Panc1 (cell line): ENCODE measurements at regions of chr2 and their contacts with region 1.

Region 1: DNA sequence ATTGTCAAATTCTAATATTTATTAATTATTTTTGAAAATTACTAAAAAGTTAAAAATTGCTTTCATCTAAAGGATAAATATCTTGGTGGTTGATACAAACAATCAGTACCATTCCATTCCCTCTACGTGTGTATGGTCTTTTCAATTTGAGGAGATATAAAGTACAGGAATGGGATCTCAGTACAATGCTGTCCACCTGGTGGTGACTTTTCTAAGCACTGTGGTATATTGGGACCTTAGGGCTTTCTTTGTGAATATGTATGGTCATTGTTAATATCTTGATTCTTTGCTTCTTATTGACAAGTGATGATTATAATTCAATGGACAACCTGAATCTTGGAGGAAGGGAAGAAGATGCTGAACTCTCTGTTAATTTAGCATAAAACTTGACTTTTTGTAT is 83.1 kb downstream of the NBEAL1 start:
- DNase-seq: no peak
- ATAC-seq: peak; percentile 78; the same call in 1 of the 2 replicates
- H3K4me3 ChIP-seq: no peak overlapping the region
- H3K27ac ChIP-seq: no peak overlapping the region
- H3K4me1 ChIP-seq: no peaks in the 10 kb centered on the region
- H3K27me3 ChIP-seq: no peaks in the 10 kb centered on the region
- CTCF ChIP-seq: no peak; the same call in 1 of the 2 replicates

Region 2: DNA sequence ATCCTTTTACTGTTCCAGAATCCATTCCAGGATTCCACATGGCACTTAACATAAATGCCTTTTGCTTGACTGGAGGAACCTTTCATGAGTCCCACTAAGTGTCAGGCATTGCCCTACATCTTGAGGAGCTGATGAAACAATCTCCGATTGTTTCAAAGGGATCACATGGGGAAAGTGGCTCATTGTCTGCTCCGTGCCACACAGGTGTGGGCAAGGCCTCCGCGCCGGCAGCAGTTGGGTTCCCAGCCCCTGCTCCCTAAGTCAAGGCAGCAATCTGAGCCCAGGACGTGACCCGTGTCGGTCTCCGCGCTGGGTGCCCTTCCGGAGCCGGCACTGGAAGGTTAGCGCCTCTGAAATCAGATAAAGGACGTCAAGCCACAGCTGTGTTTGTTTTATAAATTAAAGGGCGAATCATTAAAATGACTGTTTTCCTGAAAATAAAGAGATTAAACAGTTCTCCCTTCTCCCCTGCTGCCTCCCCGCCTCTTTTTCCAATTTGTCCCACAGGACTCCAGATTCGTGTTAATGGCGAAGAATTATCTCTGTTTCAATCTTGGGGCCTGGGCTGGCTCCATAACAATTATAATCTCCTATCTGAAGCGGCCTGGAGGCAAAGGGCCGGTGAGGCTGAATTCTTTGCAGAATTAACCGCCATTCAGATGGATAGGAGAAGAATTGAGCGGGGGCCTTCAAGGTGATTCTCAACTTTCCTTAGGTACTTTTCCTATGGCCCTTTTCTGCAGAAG is 1148.4 kb before region 1 on chr2:
- CTCF ChIA-PET with region 1: no interaction called
- POLR2A ChIA-PET with region 1: no interaction called
- in situ Hi-C with region 1: no loop called
- intact Hi-C with region 1: no loop called
- DNase-seq: no peak
- ATAC-seq: 0 out of 2 replicates have a peak, but pooled peaks have one; percentile 50
- H3K4me3 ChIP-seq: no peak overlapping the region
- H3K27ac ChIP-seq: peak overlapping the region; percentile 58; the same call in 1 of the 2 replicates
- H3K4me1 ChIP-seq: no peaks in the 10 kb centered on the region
- H3K27me3 ChIP-seq: no peaks in the 10 kb centered on the region
- CTCF ChIP-seq: no peak

Region 3: DNA sequence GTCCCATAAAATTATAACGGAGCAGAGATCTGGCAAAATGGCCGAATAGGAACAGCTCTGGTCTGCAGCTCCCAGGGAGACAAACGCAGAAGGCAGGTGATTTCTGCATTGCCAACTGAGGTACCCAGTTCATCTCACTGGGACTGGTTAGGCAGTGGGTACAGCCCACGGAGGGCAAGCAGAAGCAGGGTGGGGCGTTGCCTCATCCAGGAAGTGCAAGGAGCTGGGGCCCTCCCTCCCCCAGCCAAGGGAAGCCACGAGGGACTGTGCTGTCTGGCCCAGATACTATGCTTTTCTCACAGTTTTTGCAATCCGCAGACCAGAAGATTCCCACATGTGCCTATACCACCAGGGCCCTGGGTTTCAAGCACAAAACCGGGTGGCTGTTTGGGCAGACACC is 248.9 kb before region 1 on chr2:
- CTCF ChIA-PET with region 1: interaction called, 10 read pairs
- POLR2A ChIA-PET with region 1: no interaction called
- in situ Hi-C with region 1: no loop called
- intact Hi-C with region 1: no loop called
- DNase-seq: no peak
- ATAC-seq: peak; percentile 48
- H3K4me3 ChIP-seq: no peak overlapping the region
- H3K27ac ChIP-seq: no peak overlapping the region
- H3K4me1 ChIP-seq: no peaks in the 10 kb centered on the region
- H3K27me3 ChIP-seq: no peaks in the 10 kb centered on the region
- CTCF ChIP-seq: no peak